ENCODE measurements at regions of chr18 and their contacts with region 1.

Region 1: GRCh38 chr18:22977847-22978701 is 44.9 kb downstream of the RBBP8 start:
- DNase-seq: peak; percentile 91
- H3K4me3 ChIP-seq: peak overlapping the region in 1 of 3 experiments; percentile 3
- H3K27ac ChIP-seq: peak overlapping the region; percentile 54
- H3K4me1 ChIP-seq: peaks cover 12% of the 10 kb centered on the region
- H3K27me3 ChIP-seq: no peaks in the 10 kb centered on the region
- CTCF ChIP-seq: no peak
- POLR2A ChIP-seq: no peak

Region 2: DNA sequence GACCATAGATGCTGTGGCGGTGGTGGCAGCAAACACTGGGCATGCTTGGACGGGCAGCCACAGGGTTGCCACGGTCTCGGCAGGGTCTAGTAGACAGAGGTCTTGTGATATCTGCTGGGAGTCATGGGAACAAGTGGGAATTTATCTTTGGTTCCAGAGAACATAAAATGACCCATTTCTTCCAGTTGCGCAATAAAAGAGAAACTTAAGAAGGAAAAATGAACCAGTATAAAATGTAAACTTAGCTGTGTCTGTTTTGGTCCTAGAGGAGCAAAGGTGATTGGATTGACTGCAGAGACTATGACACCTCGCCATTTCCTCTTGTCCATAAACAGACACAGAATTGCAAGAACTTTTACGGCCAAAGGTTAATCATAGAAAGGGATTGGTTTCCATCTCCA is 177.5 kb before region 1 on chr18:
- CTCF ChIA-PET with region 1: interaction called, 165 read pairs
- POLR2A ChIA-PET with region 1: no interaction called
- dilution Hi-C with region 1: no loop called
- intact Hi-C with region 1: no loop called
- DNase-seq: no peak
- H3K4me3 ChIP-seq: no peak overlapping the region
- H3K27ac ChIP-seq: no peak overlapping the region
- H3K4me1 ChIP-seq: no peaks in the 10 kb centered on the region
- H3K27me3 ChIP-seq: peaks cover 33 to 48% of the 10 kb centered on the region in 2 experiments
- CTCF ChIP-seq: no peak
- POLR2A ChIP-seq: no peak

Region 3: DNA sequence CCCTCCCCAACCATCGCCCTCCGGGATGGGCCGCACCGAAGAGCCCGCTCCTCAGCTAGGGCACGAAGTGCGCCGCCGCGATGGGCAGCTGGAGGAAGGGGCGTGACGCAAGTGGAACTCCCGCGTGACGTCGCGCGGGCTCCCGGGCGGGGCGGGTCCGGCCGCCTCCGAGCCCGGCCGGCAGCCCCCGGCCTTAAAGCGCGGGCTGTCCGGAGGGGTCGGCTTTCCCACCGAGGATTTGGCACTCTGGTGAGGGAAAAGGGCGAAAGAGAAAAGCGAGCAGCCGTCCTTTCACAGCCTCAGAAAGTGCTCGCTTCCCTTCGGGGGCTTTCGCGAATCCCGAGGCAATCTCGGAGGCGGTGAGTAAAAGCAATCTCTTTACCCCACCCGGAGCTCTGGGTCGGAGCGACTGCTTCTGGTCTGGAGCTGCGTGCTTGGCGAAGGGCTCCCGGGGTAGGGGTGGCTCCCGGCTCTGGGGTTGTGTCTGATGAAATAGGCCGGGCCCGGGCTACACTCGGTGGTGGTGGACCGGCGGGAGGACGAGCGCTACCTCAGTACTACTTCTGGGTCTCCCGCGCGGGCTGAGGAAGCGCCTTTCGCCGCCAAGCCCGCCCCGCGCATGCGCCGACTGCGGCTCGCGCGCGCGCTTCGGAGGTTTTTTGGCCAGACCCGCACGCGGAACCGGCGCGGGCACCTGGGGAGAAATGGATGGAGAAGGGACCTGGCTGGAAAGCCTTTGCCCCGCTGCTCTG is 44.7 kb before region 1 on chr18 and contains the start of gene RBBP8:
- CTCF ChIA-PET with region 1: interaction called, 219 read pairs
- POLR2A ChIA-PET with region 1: interaction called, 9 read pairs
- dilution Hi-C with region 1: no loop called
- intact Hi-C with region 1: loop called (anchors 1 kb)
- DNase-seq: peak; percentile 84
- H3K4me3 ChIP-seq: peak within 1 kb of the TSS; percentile 41 to 84 (median 54)
- H3K27ac ChIP-seq: peak within 1 kb of the TSS; percentile 73
- H3K4me1 ChIP-seq: peaks cover 21% of the 10 kb centered on the region
- H3K27me3 ChIP-seq: no peaks in the 10 kb centered on the region
- CTCF ChIP-seq: no peak
- POLR2A ChIP-seq: peak; percentile 59
- total RNA-seq, gene RBBP8: 13.5 and 15.4 TPM in 2 replicates

Region 4: GRCh38 chr18:22952525-22952924 is 25.5 kb before region 1 on chr18:
- CTCF ChIA-PET with region 1: interaction called, 23 read pairs
- POLR2A ChIA-PET with region 1: no interaction called
- dilution Hi-C with region 1: no loop called
- intact Hi-C with region 1: no loop called
- DNase-seq: peak; percentile 50
- H3K4me3 ChIP-seq: no peak overlapping the region
- H3K27ac ChIP-seq: no peak overlapping the region
- H3K4me1 ChIP-seq: peaks cover 16% of the 10 kb centered on the region
- H3K27me3 ChIP-seq: no peaks in the 10 kb centered on the region
- CTCF ChIP-seq: no peak
- POLR2A ChIP-seq: no peak

Region 5: DNA sequence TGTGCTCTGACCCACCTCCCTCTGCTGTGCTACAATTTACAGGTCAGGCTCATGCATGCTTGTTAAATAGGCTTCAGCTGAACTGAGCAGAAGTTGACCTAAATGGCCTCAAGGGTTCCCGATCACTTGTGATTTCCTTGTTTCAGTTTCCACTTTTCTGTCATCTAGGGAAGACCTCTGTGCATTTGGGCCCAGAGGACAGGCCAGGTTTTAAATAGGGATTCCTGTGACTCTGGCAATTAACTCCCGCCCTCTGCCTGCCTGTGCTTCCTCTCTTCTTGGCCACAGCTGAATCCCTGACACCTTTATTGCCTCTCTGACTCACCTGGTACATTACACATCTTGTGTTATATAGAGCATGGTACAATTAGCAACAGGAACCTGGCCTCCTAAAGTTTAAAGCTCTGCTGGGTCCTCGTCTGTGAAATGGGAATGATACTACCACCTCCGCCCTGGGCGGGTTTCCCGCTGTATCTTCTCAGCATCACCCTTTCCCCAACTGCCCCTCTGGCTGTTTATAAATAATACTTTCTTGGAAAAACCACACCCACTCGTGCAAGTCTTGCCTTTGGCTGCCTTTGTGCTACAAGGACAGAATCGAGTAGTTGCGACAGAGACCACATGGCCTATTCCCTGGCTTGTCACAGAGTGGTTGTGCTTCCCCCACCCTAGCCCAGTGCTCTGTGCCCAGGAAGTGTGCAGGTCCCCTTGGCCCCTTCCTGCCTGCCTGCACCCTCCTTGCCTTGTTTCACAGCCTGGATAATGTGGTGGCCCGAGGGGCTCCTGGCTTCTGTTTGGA is 165.1 kb after region 1 on chr18:
- CTCF ChIA-PET with region 1: no interaction called
- POLR2A ChIA-PET with region 1: no interaction called
- dilution Hi-C with region 1: no loop called
- intact Hi-C with region 1: no loop called
- DNase-seq: no peak
- H3K4me3 ChIP-seq: no peak overlapping the region
- H3K27ac ChIP-seq: no peak overlapping the region
- H3K4me1 ChIP-seq: peaks cover 32% of the 10 kb centered on the region
- H3K27me3 ChIP-seq: no peaks in the 10 kb centered on the region
- CTCF ChIP-seq: no peak
- POLR2A ChIP-seq: no peak